Ascending aorta (tissue), 2 donors: ENCODE measurements at regions of chr7 and their contacts with region 1.

Region 1: GRCh38 chr7:33062782-33063443 is 337 bp upstream of the NT5C3A start:
- DNase-seq: peak; percentile 81 to 94
- H3K4me3 ChIP-seq: peak overlapping the region; percentile 67 to 86
- H3K27ac ChIP-seq: peak overlapping the region; percentile 87 to 94
- H3K4me1 ChIP-seq: peaks cover 3 to 18% of the 10 kb centered on the region in 2 donors
- H3K27me3 ChIP-seq: no peaks in the 10 kb centered on the region
- CTCF ChIP-seq: no peak

Region 2: DNA sequence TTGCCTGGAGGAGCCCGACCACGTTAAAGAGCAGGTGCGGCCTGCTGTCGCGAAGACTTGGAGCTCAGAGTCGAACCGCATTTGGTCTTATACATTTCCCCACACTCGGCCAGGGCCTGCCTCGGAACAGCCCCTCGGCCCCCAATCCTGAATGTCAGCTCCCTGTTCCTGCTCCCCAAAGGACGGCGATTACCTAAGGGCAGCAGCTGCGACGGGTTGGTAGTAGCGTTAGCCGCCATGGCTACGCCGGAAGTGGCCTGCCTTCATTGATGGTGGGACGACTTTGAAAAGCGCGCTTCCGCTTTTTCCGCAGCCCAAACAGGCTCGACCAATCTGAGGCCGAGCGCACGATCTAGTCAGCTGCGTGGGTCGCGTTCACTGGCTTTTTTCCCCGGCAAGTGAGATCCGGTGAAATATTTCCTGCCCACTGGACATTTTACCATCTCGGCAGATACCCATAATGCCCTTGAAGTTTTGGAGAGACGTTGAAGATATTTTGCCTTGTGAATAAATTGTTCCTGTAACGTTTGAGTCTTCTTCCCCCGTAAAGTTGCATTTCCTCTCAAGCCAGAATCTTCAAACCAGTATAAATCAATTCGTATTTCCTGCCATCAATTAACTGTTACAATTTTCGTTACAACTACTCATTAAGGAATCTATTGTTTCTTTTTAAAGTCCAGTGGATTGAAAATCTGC is 572.6 kb before region 1 on chr7 and contains the start of gene LSM5:
- intact Hi-C with region 1: loop called (anchors 5 kb)
- DNase-seq: peak; percentile 49 to 95
- H3K4me3 ChIP-seq: peak within 1 kb of the TSS; percentile 73 to 96
- H3K27ac ChIP-seq: peak within 1 kb of the TSS; percentile 80 to 85
- H3K4me1 ChIP-seq: peaks cover 6 to 9% of the 10 kb centered on the region in 2 donors
- H3K27me3 ChIP-seq: no peaks in the 10 kb centered on the region
- CTCF ChIP-seq: no peak
- total RNA-seq, gene LSM5: 20.5 TPM

Region 3: DNA sequence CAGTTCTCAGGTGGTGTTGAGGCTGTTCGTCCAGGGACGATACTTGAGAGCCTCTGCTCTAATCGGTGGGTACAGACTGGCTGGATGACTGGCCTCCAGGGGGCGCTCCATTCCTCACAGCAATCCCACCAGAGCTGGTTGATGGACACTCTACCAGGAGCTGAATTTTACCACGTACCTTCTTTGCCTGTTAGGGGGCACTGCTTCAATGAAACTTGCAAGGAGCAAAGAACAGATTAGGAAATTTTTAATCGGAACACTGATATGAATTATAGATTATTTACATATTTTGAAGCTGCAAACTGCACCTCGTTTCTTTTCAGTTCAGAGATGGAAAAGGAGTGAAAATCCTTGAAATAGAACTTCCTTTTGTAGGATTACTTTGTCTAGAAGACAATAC is 216.2 kb before region 1 on chr7:
- intact Hi-C with region 1: loop called (anchors 5 kb)
- DNase-seq: peak; percentile 51 to 95
- H3K4me3 ChIP-seq: peak overlapping the region in 1 of 2 donors; percentile 19
- H3K27ac ChIP-seq: no peak overlapping the region
- H3K4me1 ChIP-seq: no peaks in the 10 kb centered on the region
- H3K27me3 ChIP-seq: no peaks in the 10 kb centered on the region
- CTCF ChIP-seq: peak; percentile 71 to 90 (median 87)

Region 4: GRCh38 chr7:32957326-32958045 is 105.4 kb before region 1 on chr7 and contains the start of gene FKBP9:
- intact Hi-C with region 1: loop called (anchors 1 kb)
- DNase-seq: peak in 1 of 2 donors; percentile 84
- H3K4me3 ChIP-seq: peak within 1 kb of the TSS; percentile 72 to 97
- H3K27ac ChIP-seq: peak within 1 kb of the TSS; percentile 79 to 84
- H3K4me1 ChIP-seq: peaks cover 0 to 6% of the 10 kb centered on the region in 2 donors
- H3K27me3 ChIP-seq: no peaks in the 10 kb centered on the region
- CTCF ChIP-seq: no peak
- total RNA-seq, gene FKBP9: 302 TPM

Region 5: GRCh38 chr7:33040803-33041516 is 22.0 kb before region 1 on chr7:
- intact Hi-C with region 1: no loop called
- DNase-seq: no peak
- H3K4me3 ChIP-seq: peak overlapping the region in 1 of 2 donors; percentile 20
- H3K27ac ChIP-seq: no peak overlapping the region
- H3K4me1 ChIP-seq: peaks cover 0 to 7% of the 10 kb centered on the region in 2 donors
- H3K27me3 ChIP-seq: no peaks in the 10 kb centered on the region
- CTCF ChIP-seq: no peak

Region 6: GRCh38 chr7:33109005-33109757 is 46.3 kb after region 1 on chr7 and contains the start of gene RP9:
- intact Hi-C with region 1: loop called (anchors 1 kb)
- DNase-seq: peak in 1 of 2 donors; percentile 75
- H3K4me3 ChIP-seq: peak within 1 kb of the TSS; percentile 96 to 100
- H3K27ac ChIP-seq: peak within 1 kb of the TSS in 1 of 2 donors; percentile 81
- H3K4me1 ChIP-seq: peaks cover 10 to 14% of the 10 kb centered on the region in 2 donors
- H3K27me3 ChIP-seq: no peaks in the 10 kb centered on the region
- CTCF ChIP-seq: peak; percentile 41 to 75 (median 57)
- total RNA-seq, gene RP9: 2.8 TPM

Region 7: GRCh38 chr7:33128990-33129805 is 66.3 kb after region 1 on chr7 and contains the start of gene BBS9:
- intact Hi-C with region 1: loop called (anchors 1 kb)
- DNase-seq: peak; percentile 73 to 96
- H3K4me3 ChIP-seq: peak within 1 kb of the TSS; percentile 84 to 96
- H3K27ac ChIP-seq: peak within 1 kb of the TSS; percentile 30 to 77
- H3K4me1 ChIP-seq: peaks cover 0 to 8% of the 10 kb centered on the region in 2 donors
- H3K27me3 ChIP-seq: no peaks in the 10 kb centered on the region
- CTCF ChIP-seq: no peak
- total RNA-seq, gene BBS9: 23.3 TPM